Activated CD4-positive, alpha-beta T cell treated with anti-CD3 and anti-CD28 coated beads for 36 hours (primary cell): ENCODE measurements at regions of chr12 and their contacts with region 1.

Region 1: DNA sequence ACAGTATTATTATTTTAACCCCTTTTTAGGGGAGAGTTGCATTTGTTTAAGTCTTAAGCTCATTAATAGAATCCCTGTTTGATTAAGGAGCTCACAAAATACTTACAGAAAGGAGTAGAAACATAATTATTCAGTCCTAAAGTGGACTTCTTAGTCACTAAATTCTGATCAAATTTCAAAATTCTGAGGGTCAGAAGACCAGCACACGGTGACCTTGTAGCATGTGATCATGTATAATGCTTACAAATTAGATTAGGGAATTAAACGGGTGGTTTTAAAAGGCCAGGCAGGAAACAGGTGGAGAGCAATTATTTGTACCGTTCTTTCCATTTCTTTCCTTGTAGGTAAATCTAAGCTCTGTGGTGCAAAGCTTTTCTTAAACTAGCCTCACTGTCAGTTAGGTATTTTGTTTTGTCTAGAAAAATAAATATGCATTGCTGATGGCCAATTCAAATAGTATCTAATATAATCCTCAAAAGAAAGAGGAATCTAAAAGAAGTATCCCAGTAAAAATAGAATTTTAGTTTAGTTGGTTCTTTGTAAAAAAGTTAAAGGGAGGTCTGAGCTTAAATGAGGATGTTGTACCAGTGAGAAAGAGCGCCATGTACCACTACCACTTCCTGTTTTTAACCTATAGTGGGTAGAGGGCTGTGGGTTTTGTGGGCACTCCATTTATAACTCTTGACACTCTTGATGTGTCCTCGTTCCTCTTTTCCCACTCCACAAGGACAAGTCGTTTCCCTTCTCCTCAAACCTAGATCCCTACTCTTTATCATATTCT is 51.1 kb downstream of the SLC38A1 start:
- DNase-seq: peak; percentile 73
- ATAC-seq: no peak
- H3K4me3 Mint-ChIP-seq: peak overlapping the region; percentile 37
- H3K27ac Mint-ChIP-seq: peak overlapping the region; percentile 88
- H3K4me1 Mint-ChIP-seq: peaks cover 95% of the 10 kb centered on the region
- H3K27me3 Mint-ChIP-seq: no peaks in the 10 kb centered on the region

Region 2: DNA sequence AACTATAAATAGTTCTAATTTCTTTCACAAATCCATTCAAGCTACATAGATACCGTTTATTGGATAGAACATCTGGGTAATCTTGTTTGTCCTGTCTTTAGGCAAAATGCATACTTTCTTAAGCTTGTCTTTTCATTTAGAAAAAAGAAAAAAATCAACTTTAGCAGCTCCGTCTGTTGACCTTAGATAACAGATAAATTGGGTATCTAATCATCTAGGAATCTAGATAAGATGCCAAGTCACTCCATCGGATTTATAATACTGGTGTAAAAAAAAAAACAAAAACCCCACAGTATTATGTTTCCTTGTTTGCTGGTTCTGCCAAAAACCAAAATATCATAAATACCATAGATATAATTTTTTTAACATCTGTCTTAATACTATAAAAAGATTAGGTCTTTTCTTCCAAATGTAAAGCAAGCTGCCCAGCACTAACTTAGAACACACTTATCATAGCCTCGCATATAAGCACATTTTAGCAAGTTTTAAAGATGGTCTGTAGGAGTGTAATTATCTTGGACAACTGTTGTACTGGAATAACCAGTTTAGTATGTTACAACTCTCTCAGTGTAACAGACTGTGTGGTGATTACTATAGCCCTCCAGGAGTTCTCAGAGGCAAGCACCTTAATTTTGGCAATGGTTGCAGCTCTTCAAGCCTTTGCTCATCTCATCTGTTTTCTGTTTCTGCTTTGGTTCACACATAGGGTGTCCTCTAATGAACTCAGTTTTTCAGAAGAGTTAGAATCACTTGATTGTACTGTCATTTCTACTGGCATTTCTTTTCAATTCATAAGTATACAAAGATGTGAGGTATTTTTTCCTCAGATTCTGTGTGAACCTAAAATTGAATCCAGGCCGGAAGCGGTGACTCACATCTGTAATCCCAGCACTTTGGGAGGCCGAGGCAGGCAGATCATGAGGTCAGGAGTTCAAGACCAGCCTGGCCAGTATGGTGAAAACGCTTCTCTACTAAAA is 918.7 kb before region 1 on chr12:
- CTCF ChIA-PET with region 1: no interaction called
- POLR2A ChIA-PET with region 1: interaction called, 13 read pairs
- intact Hi-C with region 1: no loop called
- DNase-seq: no peak
- ATAC-seq: no peak
- H3K4me3 Mint-ChIP-seq: no peak overlapping the region
- H3K27ac Mint-ChIP-seq: no peak overlapping the region
- H3K4me1 Mint-ChIP-seq: peaks cover under 1% of the 10 kb centered on the region
- H3K27me3 Mint-ChIP-seq: no peaks in the 10 kb centered on the region

Region 3: GRCh38 chr12:46268590-46269558 is 51.1 kb after region 1 on chr12 and contains the start of gene SLC38A1:
- CTCF ChIA-PET with region 1: interaction called, 7 read pairs
- POLR2A ChIA-PET with region 1: interaction called, 88 read pairs
- intact Hi-C with region 1: loop called (anchors 1 kb)
- DNase-seq: peak; percentile 94
- ATAC-seq: peak; percentile 61
- H3K4me3 Mint-ChIP-seq: no peak within 1 kb of the TSS
- H3K27ac Mint-ChIP-seq: no peak within 1 kb of the TSS
- H3K4me1 Mint-ChIP-seq: peaks cover 30% of the 10 kb centered on the region
- H3K27me3 Mint-ChIP-seq: no peaks in the 10 kb centered on the region
- total RNA-seq, gene SLC38A1: 167 to 180 TPM

Region 4: DNA sequence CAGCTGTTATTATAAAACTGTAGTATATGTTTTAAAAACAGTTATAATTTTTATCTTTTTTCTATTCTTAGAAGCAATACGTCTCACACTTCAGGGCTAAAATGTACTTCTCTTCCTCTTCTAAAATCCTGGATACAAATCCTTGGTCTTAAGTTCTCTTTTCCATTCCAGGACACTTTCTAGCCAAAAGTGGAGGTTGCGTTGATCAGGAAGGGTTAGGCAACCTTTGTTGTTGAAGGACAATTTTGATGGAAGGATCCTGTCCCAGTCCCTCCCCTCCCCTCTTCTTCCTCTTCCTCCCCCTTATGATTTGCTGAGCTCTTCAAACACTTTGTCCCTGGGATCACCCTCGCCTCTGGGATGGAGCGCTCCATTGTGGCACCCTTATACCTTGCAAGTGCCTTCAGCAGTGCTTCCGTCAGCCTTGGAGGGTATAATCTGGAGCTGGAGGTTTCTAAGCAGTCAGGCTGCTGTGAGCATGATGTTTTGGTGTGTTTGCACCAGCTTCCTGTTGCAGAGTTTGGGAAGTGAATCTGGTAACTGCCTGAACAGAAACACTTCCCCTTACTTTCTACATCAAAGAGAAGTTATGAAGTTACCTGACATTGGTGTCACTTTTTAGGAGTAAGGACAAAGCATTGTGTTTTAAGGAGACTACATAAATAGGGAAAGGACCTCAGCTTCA is 242.3 kb after region 1 on chr12:
- CTCF ChIA-PET with region 1: no interaction called
- POLR2A ChIA-PET with region 1: no interaction called
- intact Hi-C with region 1: loop called in 1 of 2 experiments (anchors 5 kb)
- DNase-seq: peak; percentile 17
- ATAC-seq: no peak
- H3K4me3 Mint-ChIP-seq: peak overlapping the region; percentile 46
- H3K27ac Mint-ChIP-seq: peak overlapping the region; percentile 88
- H3K4me1 Mint-ChIP-seq: peaks cover 56% of the 10 kb centered on the region
- H3K27me3 Mint-ChIP-seq: no peaks in the 10 kb centered on the region

Region 5: DNA sequence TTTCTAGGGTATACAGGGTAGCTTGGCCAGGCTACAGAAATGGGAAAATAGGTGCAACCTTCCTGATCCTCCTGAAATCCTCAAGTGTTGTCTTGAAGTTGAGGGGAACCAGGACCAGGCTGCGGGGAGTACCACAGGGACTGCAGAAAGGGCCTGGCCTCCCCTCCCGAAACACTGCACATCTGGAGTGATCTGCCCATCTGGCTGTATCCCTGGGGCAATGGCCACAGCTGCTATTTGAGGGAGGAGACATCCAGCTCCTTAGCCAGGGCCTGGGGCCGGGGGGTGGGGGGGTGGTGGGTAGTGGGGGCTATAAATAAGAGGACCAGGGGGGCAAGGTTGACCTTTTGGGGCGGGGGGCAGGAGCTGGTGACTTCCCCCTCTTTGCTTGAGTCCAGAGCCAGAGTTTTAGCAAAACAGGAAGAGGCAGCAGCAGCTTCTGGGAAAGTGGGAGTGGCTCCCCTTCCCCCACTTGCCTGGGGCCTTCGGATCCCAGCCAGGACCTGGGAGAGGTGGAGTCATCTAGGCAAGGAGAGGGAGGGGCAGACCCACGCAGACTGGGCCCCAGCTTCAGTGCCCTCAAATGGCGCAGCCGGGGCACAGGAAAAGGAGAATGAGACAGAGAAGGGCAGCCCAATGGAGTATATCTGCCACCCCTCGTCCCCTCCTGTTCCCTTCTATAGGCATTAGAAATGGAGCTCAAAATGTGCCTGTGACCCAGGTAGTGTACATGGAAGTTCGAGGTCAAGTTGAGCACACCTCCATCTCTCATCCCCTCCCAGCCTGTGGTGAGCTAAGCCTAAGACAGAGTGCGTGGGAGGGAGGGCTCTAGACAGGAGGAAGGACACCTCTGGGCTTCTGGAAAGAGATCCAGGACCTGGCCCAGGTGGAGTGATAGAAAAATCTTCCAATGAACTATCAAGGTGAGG is 1611.1 kb after region 1 on chr12:
- CTCF ChIA-PET with region 1: no interaction called
- POLR2A ChIA-PET with region 1: no interaction called
- intact Hi-C with region 1: loop called in 1 of 2 experiments (anchors 5 kb)
- DNase-seq: peak; percentile 55
- ATAC-seq: no peak
- H3K4me3 Mint-ChIP-seq: peak overlapping the region; percentile 71
- H3K27ac Mint-ChIP-seq: peak overlapping the region; percentile 92
- H3K4me1 Mint-ChIP-seq: peaks cover 91% of the 10 kb centered on the region
- H3K27me3 Mint-ChIP-seq: no peaks in the 10 kb centered on the region